ENCODE measurements at regions of chr18 and their contacts with region 1.

Region 1: DNA sequence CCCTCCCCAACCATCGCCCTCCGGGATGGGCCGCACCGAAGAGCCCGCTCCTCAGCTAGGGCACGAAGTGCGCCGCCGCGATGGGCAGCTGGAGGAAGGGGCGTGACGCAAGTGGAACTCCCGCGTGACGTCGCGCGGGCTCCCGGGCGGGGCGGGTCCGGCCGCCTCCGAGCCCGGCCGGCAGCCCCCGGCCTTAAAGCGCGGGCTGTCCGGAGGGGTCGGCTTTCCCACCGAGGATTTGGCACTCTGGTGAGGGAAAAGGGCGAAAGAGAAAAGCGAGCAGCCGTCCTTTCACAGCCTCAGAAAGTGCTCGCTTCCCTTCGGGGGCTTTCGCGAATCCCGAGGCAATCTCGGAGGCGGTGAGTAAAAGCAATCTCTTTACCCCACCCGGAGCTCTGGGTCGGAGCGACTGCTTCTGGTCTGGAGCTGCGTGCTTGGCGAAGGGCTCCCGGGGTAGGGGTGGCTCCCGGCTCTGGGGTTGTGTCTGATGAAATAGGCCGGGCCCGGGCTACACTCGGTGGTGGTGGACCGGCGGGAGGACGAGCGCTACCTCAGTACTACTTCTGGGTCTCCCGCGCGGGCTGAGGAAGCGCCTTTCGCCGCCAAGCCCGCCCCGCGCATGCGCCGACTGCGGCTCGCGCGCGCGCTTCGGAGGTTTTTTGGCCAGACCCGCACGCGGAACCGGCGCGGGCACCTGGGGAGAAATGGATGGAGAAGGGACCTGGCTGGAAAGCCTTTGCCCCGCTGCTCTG is at the start of gene RBBP8:
- DNase-seq: peak; percentile 85
- H3K4me3 Mint-ChIP-seq: peak within 1 kb of the TSS; percentile 88
- H3K27ac Mint-ChIP-seq: peak within 1 kb of the TSS; percentile 93
- H3K4me1 Mint-ChIP-seq: peaks cover 18% of the 10 kb centered on the region
- H3K27me3 Mint-ChIP-seq: no peaks in the 10 kb centered on the region
- total RNA-seq, gene RBBP8: 62.5 to 65.3 TPM

Region 2: GRCh38 chr18:22838639-22839277 is 94.6 kb before region 1 on chr18:
- CTCF ChIA-PET with region 1: interaction called, 4 read pairs
- POLR2A ChIA-PET with region 1: no interaction called
- intact Hi-C with region 1: loop called (anchors 5 kb)
- DNase-seq: peak; percentile 33
- H3K4me3 Mint-ChIP-seq: no peak overlapping the region
- H3K27ac Mint-ChIP-seq: no peak overlapping the region
- H3K4me1 Mint-ChIP-seq: no peaks in the 10 kb centered on the region
- H3K27me3 Mint-ChIP-seq: no peaks in the 10 kb centered on the region

Region 3: GRCh38 chr18:22983175-22983574 is 49.8 kb after region 1 on chr18:
- CTCF ChIA-PET with region 1: interaction called, 45 read pairs
- POLR2A ChIA-PET with region 1: interaction called, 3 read pairs
- intact Hi-C with region 1: loop called (anchors 1 kb)
- DNase-seq: no peak
- H3K4me3 Mint-ChIP-seq: no peak overlapping the region
- H3K27ac Mint-ChIP-seq: no peak overlapping the region
- H3K4me1 Mint-ChIP-seq: peaks cover 8% of the 10 kb centered on the region
- H3K27me3 Mint-ChIP-seq: no peaks in the 10 kb centered on the region

Region 4: DNA sequence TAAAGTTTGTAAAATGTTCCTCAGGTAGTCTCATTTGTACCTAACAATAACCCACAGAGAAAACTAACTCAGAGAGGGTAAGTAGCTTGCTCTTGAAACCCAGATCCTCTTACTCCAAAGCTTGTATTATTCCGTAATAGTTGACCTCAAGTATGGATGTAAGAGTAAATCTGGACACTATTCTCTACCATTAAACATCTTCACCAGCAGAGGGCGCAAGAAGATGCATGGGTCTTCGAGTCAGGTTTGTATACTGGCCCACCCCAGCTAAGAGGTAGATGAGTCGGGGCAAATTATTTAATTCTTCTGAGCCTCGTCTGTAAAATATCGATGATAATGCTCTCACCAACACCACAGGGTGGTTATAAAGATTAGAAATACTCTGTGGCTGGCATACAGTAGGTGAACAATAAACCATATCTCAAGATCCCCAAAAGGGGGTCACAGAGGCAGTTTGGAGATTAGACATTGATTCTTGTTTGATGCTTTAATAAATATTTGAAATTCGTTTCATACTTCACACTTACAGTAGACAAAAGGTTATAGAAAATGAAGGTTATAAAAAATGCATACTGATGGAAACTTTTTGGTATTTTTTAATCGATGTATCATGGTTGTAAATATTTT is 198.4 kb after region 1 on chr18:
- CTCF ChIA-PET with region 1: interaction called, 3 read pairs
- POLR2A ChIA-PET with region 1: interaction called, 3 read pairs
- intact Hi-C with region 1: loop called (anchors 5 kb)
- DNase-seq: peak; percentile 55
- H3K4me3 Mint-ChIP-seq: peak overlapping the region; percentile 8
- H3K27ac Mint-ChIP-seq: no peak overlapping the region
- H3K4me1 Mint-ChIP-seq: peaks cover 14% of the 10 kb centered on the region
- H3K27me3 Mint-ChIP-seq: peaks cover 25% of the 10 kb centered on the region

Region 5: DNA sequence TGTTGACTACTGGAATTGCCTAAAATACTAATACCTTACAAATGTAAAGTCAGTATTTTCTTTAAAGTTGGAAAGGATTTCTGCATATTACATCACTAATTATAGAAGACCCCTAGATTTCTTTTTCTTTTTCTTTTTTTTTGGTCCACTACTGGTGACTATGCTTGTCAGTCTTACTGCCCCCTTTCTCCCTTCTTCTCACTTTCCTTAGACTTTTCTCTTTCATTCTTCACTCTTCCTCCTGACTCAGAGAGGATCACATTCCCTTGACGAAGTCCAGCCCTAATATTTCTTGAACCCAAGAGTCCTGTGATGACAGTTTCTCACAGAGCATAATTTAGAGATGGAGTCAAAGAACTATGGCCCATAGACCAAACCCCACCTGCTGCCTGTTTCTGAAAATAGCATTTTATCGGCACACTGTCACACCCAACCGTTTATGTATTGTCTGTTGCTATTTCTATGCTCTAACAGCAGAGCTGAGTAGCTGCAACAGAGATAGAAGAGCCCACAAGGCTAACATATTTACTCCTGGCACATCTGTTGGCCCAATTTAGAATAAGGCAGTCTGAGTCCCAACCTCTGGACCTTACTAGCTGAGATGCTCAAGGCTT is 479.1 kb after region 1 on chr18:
- CTCF ChIA-PET with region 1: interaction called, 7 read pairs
- POLR2A ChIA-PET with region 1: no interaction called
- intact Hi-C with region 1: loop called (anchors 1 kb)
- DNase-seq: no peak
- H3K4me3 Mint-ChIP-seq: no peak overlapping the region
- H3K27ac Mint-ChIP-seq: no peak overlapping the region
- H3K4me1 Mint-ChIP-seq: no peaks in the 10 kb centered on the region
- H3K27me3 Mint-ChIP-seq: no peaks in the 10 kb centered on the region